ENCODE measurements at regions of chr5 and their contacts with region 1.

Region 1: DNA sequence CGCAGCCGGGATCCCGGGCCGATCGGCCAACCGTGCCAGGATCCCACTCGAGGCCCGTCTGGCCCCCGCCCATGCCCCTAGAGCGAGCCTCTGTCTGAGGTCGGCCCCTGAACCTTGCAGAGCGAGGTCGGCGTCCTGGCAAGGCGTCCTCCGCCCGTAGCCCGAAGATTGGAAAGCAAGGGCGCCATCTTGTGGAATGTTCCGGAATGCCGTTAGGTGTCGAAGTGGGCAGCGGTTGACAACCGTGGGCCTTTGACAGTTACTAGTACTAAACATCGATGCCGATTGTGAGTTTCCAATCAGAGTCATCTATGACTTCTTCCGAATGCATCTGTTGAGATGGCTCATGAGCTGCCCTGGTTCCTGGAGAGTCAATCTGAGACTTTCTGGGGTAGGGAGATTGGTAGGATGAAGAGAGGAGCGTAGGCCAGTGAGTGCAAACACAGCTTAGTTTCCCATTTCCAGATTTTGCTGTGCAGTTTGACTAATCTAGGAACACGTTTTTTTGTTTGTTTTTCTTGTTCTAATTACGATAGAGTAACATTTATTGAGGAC is 923 bp upstream of the PLK2 start:
- DNase-seq: peak; percentile 76 to 95 (median 88)
- ATAC-seq: peak; percentile 79
- H3K4me3 ChIP-seq: peak overlapping the region; percentile 66
- H3K4me3 Mint-ChIP-seq: peak overlapping the region; percentile 86 to 96 (median 91)
- H3K27ac ChIP-seq: peak overlapping the region; percentile 84
- H3K27ac Mint-ChIP-seq: peak overlapping the region; percentile 20 to 90 (median 79)
- H3K4me1 ChIP-seq: peaks cover 0 to 9% of the 10 kb centered on the region in 2 donors
- H3K4me1 Mint-ChIP-seq: peaks cover 9 to 26% (median 16%) of the 10 kb centered on the region in 7 donors
- H3K27me3 ChIP-seq: no peaks in the 10 kb centered on the region
- H3K27me3 Mint-ChIP-seq: peaks cover 4 to 22% (median 14%) of the 10 kb centered on the region in 5 donors

Region 2: GRCh38 chr5:56900858-56901578 is 1559.8 kb before region 1 on chr5:
- CTCF ChIA-PET with region 1: no interaction called
- POLR2A ChIA-PET with region 1: no interaction called
- intact Hi-C with region 1: loop called (anchors 2 kb)
- DNase-seq: peak in 7 of 9 donors; percentile 20 to 62 (median 51)
- ATAC-seq: peak; percentile 81
- H3K4me3 ChIP-seq: no peak overlapping the region
- H3K4me3 Mint-ChIP-seq: no peak overlapping the region
- H3K27ac ChIP-seq: no peak overlapping the region
- H3K27ac Mint-ChIP-seq: no peak overlapping the region
- H3K4me1 ChIP-seq: no peaks in the 10 kb centered on the region
- H3K4me1 Mint-ChIP-seq: peaks cover 0 to 6% (median 0%) of the 10 kb centered on the region in 7 donors
- H3K27me3 ChIP-seq: no peaks in the 10 kb centered on the region
- H3K27me3 Mint-ChIP-seq: peaks cover 0 to 15% (median 0%) of the 10 kb centered on the region in 5 donors

Region 3: GRCh38 chr5:57298295-57298984 is 1162.4 kb before region 1 on chr5:
- CTCF ChIA-PET with region 1: interaction called, 97 read pairs
- POLR2A ChIA-PET with region 1: interaction called, 19 read pairs
- intact Hi-C with region 1: loop called (anchors 1 kb)
- DNase-seq: peak; percentile 56 to 85 (median 79)
- ATAC-seq: peak; percentile 94
- H3K4me3 ChIP-seq: peak overlapping the region; percentile 34
- H3K4me3 Mint-ChIP-seq: peak overlapping the region; percentile 72 to 80 (median 77)
- H3K27ac ChIP-seq: peak overlapping the region; percentile 26
- H3K27ac Mint-ChIP-seq: peak overlapping the region in 8 of 9 donors; percentile 13 to 90 (median 56)
- H3K4me1 ChIP-seq: peaks cover 8 to 9% of the 10 kb centered on the region in 2 donors
- H3K4me1 Mint-ChIP-seq: peaks cover 6 to 22% (median 14%) of the 10 kb centered on the region in 7 donors
- H3K27me3 ChIP-seq: no peaks in the 10 kb centered on the region
- H3K27me3 Mint-ChIP-seq: peaks cover 0 to 5% (median 0%) of the 10 kb centered on the region in 5 donors

Region 4: DNA sequence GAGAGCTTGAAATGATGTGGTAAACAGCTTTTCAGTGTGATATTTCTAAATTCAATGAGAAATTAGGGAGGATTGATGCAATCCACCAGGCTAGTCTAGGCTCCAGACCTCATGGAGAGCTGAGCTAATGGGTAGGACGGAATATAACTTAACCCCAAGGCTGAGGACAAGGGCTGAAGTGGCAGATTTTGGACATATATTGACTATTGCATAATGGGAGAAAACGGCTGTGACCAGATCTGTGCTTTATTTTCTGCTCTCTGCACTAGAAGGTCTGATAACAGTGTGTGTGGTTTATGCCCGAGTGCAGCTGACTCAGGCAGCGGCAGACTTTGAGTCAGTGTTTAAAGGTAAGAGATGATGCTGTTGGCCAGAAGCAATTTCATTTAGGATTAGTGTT is 1048.8 kb before region 1 on chr5:
- CTCF ChIA-PET with region 1: no interaction called
- POLR2A ChIA-PET with region 1: no interaction called
- intact Hi-C with region 1: loop called in 1 of 2 experiments (anchors 1 kb)
- DNase-seq: no peak
- ATAC-seq: no peak
- H3K4me3 ChIP-seq: no peak overlapping the region
- H3K4me3 Mint-ChIP-seq: no peak overlapping the region
- H3K27ac ChIP-seq: no peak overlapping the region
- H3K27ac Mint-ChIP-seq: no peak overlapping the region
- H3K4me1 ChIP-seq: no peaks in the 10 kb centered on the region
- H3K4me1 Mint-ChIP-seq: no peaks in the 10 kb centered on the region
- H3K27me3 ChIP-seq: no peaks in the 10 kb centered on the region
- H3K27me3 Mint-ChIP-seq: peaks cover 0 to 6% (median 3%) of the 10 kb centered on the region in 5 donors

Region 5: GRCh38 chr5:57499262-57500050 is 961.4 kb before region 1 on chr5:
- CTCF ChIA-PET with region 1: interaction called, 28 read pairs
- POLR2A ChIA-PET with region 1: interaction called, 31 read pairs
- intact Hi-C with region 1: loop called (anchors 1 kb)
- DNase-seq: peak in 5 of 9 donors; percentile 8 to 25 (median 21)
- ATAC-seq: peak; percentile 44
- H3K4me3 ChIP-seq: peak overlapping the region; percentile 28
- H3K4me3 Mint-ChIP-seq: peak overlapping the region; percentile 8 to 78 (median 66)
- H3K27ac ChIP-seq: no peak overlapping the region
- H3K27ac Mint-ChIP-seq: peak overlapping the region in 4 of 9 donors; percentile 39 to 74 (median 68)
- H3K4me1 ChIP-seq: peaks cover 0 to 16% of the 10 kb centered on the region in 2 donors
- H3K4me1 Mint-ChIP-seq: peaks cover 18 to 44% (median 32%) of the 10 kb centered on the region in 7 donors
- H3K27me3 ChIP-seq: no peaks in the 10 kb centered on the region
- H3K27me3 Mint-ChIP-seq: peaks cover 0 to 2% (median 0%) of the 10 kb centered on the region in 5 donors

Region 6: DNA sequence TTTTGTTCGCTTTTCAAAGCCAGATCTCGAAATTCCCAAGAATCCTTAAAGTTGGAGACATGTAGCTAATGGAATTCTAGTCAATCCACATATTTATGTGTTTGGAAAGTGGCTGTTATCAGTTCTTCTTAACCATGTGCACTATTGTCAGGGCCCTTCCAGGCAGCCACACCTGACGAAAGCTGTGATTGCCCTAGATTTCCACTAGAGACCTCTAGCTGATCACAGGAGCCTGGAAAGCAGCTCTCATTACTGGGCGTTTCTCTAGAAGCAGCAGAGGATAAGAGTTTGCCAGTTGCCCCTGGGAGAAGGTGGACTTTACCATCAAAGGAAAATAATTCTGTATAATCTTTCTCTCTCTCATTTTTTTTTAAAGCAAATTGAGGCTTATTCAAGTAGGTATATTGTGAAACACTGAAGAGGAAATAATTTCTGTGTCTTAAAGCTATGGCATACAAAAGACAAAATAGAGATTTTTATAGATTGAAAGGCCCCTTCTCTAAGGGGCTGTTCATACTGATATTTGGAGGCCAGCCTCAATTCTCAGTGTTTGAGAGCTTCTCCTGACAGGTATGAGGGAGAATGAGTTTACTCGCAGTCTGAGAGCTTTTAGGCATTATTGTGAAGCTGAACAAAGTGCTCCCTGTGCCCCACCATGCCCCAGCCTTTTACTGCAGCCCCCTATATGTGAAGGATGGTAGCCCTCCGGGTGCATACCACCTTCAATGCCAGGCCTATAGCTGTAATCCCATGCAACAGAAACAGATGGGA is 572.8 kb before region 1 on chr5:
- CTCF ChIA-PET with region 1: no interaction called
- POLR2A ChIA-PET with region 1: no interaction called
- intact Hi-C with region 1: loop called in 1 of 2 experiments (anchors 5 kb)
- DNase-seq: no peak
- ATAC-seq: no peak
- H3K4me3 ChIP-seq: no peak overlapping the region
- H3K4me3 Mint-ChIP-seq: no peak overlapping the region
- H3K27ac ChIP-seq: no peak overlapping the region
- H3K27ac Mint-ChIP-seq: no peak overlapping the region
- H3K4me1 ChIP-seq: no peaks in the 10 kb centered on the region
- H3K4me1 Mint-ChIP-seq: no peaks in the 10 kb centered on the region
- H3K27me3 ChIP-seq: no peaks in the 10 kb centered on the region
- H3K27me3 Mint-ChIP-seq: peaks cover 0 to 16% (median 1%) of the 10 kb centered on the region in 5 donors

Region 7: DNA sequence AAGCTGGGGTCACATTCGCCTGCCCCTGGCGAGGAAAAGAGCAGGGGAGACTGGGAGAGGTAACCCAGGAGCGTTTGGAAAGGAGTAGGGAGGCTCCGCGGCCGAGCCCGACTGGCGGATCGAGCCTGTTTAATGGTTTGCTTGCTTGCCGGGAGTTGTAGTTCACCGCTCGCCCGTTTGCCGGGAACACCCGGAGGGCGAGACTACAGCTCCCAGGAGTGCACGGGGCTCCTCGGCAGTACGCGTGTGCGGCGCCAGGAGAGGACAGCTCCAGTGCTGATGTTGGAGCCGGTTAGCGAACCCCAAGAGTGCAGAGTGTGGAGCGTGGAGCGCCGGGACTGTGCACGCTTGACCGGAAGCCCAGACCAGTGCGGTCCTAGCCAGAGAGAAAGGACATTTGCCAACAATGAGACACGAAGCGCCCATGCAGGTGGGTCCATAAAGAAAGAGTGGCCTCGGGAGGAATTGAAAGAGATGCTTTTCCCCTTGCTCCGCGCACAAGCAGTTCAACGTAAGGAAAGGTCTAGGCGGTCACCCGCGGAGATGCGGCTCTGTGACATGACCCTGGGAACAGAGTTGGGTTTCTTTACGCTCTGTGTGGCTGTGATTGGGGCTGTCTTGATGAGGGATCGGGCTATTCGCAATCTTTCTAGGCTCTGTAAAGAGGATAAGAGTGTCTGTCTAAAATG is 122.1 kb after region 1 on chr5 and contains the start of gene RAB3C:
- CTCF ChIA-PET with region 1: no interaction called
- POLR2A ChIA-PET with region 1: no interaction called
- intact Hi-C with region 1: no loop called
- DNase-seq: peak in 6 of 9 donors; percentile 11 to 54 (median 22)
- ATAC-seq: peak; percentile 99
- H3K4me3 ChIP-seq: peak within 1 kb of the TSS; percentile 14
- H3K4me3 Mint-ChIP-seq: peak within 1 kb of the TSS; percentile 56 to 83 (median 77)
- H3K27ac ChIP-seq: no peak within 1 kb of the TSS
- H3K27ac Mint-ChIP-seq: no peak within 1 kb of the TSS
- H3K4me1 ChIP-seq: no peaks in the 10 kb centered on the region
- H3K4me1 Mint-ChIP-seq: peaks cover 15 to 28% (median 19%) of the 10 kb centered on the region in 7 donors
- H3K27me3 ChIP-seq: peaks cover 0 to 3% of the 10 kb centered on the region in 2 donors
- H3K27me3 Mint-ChIP-seq: peaks cover 39 to 66% (median 51%) of the 10 kb centered on the region in 5 donors
- total RNA-seq, gene RAB3C: not detected

Region 8: GRCh38 chr5:58738336-58738735 is 277.5 kb after region 1 on chr5:
- CTCF ChIA-PET with region 1: no interaction called
- POLR2A ChIA-PET with region 1: no interaction called
- intact Hi-C with region 1: no loop called
- DNase-seq: no peak
- ATAC-seq: no peak
- H3K4me3 ChIP-seq: no peak overlapping the region
- H3K4me3 Mint-ChIP-seq: no peak overlapping the region
- H3K27ac ChIP-seq: no peak overlapping the region
- H3K27ac Mint-ChIP-seq: no peak overlapping the region
- H3K4me1 ChIP-seq: no peaks in the 10 kb centered on the region
- H3K4me1 Mint-ChIP-seq: no peaks in the 10 kb centered on the region
- H3K27me3 ChIP-seq: no peaks in the 10 kb centered on the region
- H3K27me3 Mint-ChIP-seq: peaks cover 0 to 13% (median 6%) of the 10 kb centered on the region in 5 donors